ENCODE measurements at regions of chr18 and their contacts with region 1.

Region 1: DNA sequence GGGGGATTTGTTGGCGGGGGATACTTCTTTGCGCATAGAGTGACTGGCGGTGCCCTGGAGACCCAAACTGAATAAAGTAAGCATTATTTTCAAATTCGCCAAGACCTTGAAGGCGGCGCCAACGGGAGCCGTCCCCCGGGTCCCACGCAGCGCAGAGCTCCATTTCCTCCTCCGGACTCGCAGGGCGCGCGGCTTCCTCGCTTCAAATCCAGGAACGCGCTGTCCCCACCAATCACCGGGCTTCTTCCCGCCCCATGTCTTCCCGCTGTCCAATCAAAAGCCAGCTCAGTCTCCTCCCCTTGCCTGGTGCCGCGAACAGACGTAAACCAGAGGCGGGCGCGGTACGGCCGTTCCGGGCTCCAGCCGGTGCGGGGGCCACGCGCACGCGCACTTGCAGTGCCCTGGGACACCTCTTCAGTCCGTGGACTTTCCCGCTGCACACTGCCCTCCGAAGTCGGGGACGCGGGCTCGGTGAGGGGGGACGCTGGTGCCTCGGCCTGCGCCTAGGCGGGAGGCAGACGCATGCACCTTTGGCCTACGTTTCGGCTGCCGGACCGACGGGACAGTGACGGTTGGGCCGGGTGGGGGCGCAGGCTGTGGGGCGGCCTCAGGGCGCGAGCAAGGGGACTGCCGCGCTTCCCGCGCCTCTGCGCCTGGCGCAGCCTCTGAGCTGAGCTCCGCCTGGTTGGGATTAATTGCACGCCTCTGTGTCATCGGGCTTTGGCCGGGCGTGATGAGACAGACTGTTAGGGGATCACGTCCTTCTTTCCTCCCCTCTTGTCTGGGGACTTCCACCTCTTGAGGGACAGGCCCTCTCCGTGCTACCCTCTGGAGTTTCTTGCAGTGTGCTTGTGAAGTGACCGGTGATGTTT is at the start of gene CEP192:
- DNase-seq: peak; percentile 98 to 99
- H3K4me3 ChIP-seq: peak within 1 kb of the TSS; percentile 78
- H3K4me3 Mint-ChIP-seq: peak within 1 kb of the TSS; percentile 72
- H3K27ac Mint-ChIP-seq: peak within 1 kb of the TSS; percentile 70
- H3K4me1 ChIP-seq: peaks cover 8% of the 10 kb centered on the region; the same call in 1 of the 2 replicates
- H3K4me1 Mint-ChIP-seq: peaks cover 20% of the 10 kb centered on the region
- H3K27me3 ChIP-seq: no peaks in the 10 kb centered on the region
- H3K27me3 Mint-ChIP-seq: no peaks in the 10 kb centered on the region
- CTCF ChIP-seq: peak in 1 of 2 experiments; percentile 27
- total RNA-seq, gene CEP192: 33.5 and 38.1 TPM in 2 replicates

Region 2: GRCh38 chr18:12777500-12777944 is 213.7 kb before region 1 on chr18:
- CTCF ChIA-PET with region 1: no interaction called
- POLR2A ChIA-PET with region 1: interaction called, 13 read pairs
- intact Hi-C with region 1: no loop called
- DNase-seq: peak; percentile 52 to 71
- H3K4me3 ChIP-seq: peak overlapping the region; percentile 53
- H3K4me3 Mint-ChIP-seq: peak overlapping the region; percentile 83
- H3K27ac Mint-ChIP-seq: peak overlapping the region; percentile 86
- H3K4me1 ChIP-seq: 0 out of 2 replicates have a peak, but pooled peaks cover 6% of the 10 kb centered on the region
- H3K4me1 Mint-ChIP-seq: no peaks in the 10 kb centered on the region
- H3K27me3 ChIP-seq: no peaks in the 10 kb centered on the region
- H3K27me3 Mint-ChIP-seq: no peaks in the 10 kb centered on the region
- CTCF ChIP-seq: no peak

Region 3: DNA sequence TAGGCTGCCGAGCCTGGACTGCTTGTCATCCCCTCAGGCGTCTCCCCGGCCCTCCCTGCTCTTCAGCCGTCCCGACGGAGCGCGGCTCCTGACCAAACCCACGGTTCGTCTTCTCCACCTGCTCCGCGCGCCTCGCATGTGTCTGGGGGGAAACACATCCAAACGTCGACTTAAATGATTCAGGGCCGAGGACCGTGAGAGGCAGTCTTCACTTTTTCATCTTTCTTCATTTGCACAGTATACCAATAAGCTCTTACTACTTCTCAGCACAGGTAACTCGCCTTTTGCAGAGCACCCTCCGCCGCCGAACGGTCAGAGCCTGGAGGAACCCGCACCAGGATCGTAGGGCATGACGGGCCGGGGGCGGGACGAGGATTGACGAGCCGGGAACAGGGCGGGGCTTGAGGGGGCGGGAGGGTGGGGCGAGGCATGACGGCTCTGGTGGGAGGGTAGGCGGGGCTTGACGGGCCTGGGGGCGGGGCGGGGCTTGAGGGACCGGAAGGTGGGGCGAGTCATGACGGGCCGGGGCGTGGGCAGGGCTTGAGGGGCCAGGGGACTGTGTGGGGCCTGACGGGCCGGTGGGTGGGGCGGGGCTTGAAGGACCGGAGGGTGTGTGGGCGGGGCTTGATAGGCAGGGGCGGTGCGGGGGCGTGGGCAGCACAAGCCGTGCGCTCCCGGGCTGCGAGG is 43.7 kb before region 1 on chr18 and contains the start of gene SEH1L:
- CTCF ChIA-PET with region 1: no interaction called
- POLR2A ChIA-PET with region 1: interaction called, 16 read pairs
- intact Hi-C with region 1: no loop called
- DNase-seq: peak; percentile 99
- H3K4me3 ChIP-seq: peak within 1 kb of the TSS; percentile 84
- H3K4me3 Mint-ChIP-seq: peak within 1 kb of the TSS; percentile 100
- H3K27ac Mint-ChIP-seq: peak within 1 kb of the TSS; percentile 100
- H3K4me1 ChIP-seq: peaks cover 19% of the 10 kb centered on the region
- H3K4me1 Mint-ChIP-seq: peaks cover 11% of the 10 kb centered on the region
- H3K27me3 ChIP-seq: no peaks in the 10 kb centered on the region
- H3K27me3 Mint-ChIP-seq: no peaks in the 10 kb centered on the region
- CTCF ChIP-seq: no peak
- total RNA-seq, gene SEH1L: 116 and 118 TPM in 2 replicates

Region 4: GRCh38 chr18:13105059-13105458 is 113.9 kb after region 1 on chr18:
- CTCF ChIA-PET with region 1: no interaction called
- POLR2A ChIA-PET with region 1: interaction called, 15 read pairs
- intact Hi-C with region 1: no loop called
- DNase-seq: no peak
- H3K4me3 ChIP-seq: no peak overlapping the region
- H3K4me3 Mint-ChIP-seq: no peak overlapping the region
- H3K27ac Mint-ChIP-seq: no peak overlapping the region
- H3K4me1 ChIP-seq: no peaks in the 10 kb centered on the region
- H3K4me1 Mint-ChIP-seq: no peaks in the 10 kb centered on the region
- H3K27me3 ChIP-seq: no peaks in the 10 kb centered on the region
- H3K27me3 Mint-ChIP-seq: no peaks in the 10 kb centered on the region
- CTCF ChIP-seq: no peak